ENCODE measurements at regions of chr19 and their contacts with region 1.

Region 1: DNA sequence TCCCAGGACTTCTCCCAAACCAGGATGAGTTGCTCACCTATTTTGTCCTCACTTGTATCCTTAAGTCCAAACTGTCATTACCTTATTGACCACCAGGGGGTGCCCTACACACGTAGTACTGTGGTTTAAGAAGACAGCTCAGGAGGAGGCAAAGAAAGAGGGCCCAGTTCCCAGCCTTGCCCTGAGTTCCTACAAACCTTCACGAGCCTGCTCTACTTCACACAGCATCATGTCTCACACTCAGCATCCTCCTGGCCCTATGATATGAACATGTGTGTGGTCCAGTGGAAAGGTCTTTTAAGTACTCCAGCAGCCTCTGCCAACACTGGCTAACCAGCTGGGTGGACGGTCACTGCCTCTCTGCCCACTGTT is 8.1 kb upstream of the ZNF784 start:
- DNase-seq: peak; percentile 80 to 99
- ATAC-seq: peak; percentile 70 to 81
- H3K4me3 ChIP-seq: no peak overlapping the region
- H3K27ac ChIP-seq: no peak overlapping the region
- H3K4me1 ChIP-seq: peaks cover 17% of the 10 kb centered on the region
- CTCF ChIP-seq: peak; percentile 91
- EP300 ChIP-seq: no peak
- POLR2A ChIP-seq: no peak
- RAD21 ChIP-seq: peak; percentile 62 to 82

Region 2: DNA sequence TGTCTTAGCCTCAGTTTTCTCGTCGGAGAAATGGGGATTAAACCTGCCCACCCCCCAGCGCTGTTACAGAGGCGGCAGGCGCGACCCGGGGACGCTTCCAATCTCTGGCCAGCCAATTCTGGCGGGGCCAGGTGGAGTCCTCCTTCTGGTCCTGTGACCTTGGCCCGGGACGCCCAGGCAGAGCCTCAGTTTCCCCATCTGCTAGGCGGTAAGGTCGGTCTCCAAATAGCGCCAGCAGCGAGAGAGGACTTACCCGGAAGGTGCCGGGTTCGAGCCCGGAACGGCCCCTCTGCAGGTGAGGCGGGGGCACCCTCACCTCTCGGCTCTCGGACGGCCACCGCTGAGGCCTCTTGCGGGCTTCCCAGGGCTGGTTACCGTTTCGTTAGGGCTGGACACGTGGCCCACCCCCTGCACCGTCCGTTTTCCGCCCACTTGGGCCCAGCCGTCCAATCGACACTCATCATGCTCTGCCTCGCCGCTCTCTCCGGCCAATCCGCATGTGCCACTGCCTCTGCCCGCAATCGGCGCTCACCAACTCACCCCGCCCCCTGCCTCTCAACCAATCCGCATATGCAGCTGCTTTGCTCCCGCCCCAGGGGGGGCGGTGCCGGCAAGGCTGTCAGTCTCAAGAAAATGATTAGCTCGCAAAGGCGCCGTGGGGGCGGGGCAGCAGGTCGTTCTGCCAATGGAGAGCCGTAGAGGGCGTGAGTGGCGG is 171.0 kb before region 1 on chr19 and contains the start of gene ISOC2:
- CTCF ChIA-PET with region 1: interaction called, 115 read pairs
- POLR2A ChIA-PET with region 1: no interaction called
- DNase-seq: peak; percentile 100
- ATAC-seq: peak; percentile 93 to 98
- H3K4me3 ChIP-seq: peak within 1 kb of the TSS; percentile 85
- H3K27ac ChIP-seq: peak within 1 kb of the TSS; percentile 83 to 90
- H3K4me1 ChIP-seq: peaks cover 14% of the 10 kb centered on the region; the same call in 2 of the 3 replicates
- CTCF ChIP-seq: no peak
- EP300 ChIP-seq: no peak
- POLR2A ChIP-seq: peak; percentile 77
- RAD21 ChIP-seq: no peak
- polyA plus RNA-seq, gene ISOC2: 45.3 and 51.5 TPM in 2 replicates

Region 3: DNA sequence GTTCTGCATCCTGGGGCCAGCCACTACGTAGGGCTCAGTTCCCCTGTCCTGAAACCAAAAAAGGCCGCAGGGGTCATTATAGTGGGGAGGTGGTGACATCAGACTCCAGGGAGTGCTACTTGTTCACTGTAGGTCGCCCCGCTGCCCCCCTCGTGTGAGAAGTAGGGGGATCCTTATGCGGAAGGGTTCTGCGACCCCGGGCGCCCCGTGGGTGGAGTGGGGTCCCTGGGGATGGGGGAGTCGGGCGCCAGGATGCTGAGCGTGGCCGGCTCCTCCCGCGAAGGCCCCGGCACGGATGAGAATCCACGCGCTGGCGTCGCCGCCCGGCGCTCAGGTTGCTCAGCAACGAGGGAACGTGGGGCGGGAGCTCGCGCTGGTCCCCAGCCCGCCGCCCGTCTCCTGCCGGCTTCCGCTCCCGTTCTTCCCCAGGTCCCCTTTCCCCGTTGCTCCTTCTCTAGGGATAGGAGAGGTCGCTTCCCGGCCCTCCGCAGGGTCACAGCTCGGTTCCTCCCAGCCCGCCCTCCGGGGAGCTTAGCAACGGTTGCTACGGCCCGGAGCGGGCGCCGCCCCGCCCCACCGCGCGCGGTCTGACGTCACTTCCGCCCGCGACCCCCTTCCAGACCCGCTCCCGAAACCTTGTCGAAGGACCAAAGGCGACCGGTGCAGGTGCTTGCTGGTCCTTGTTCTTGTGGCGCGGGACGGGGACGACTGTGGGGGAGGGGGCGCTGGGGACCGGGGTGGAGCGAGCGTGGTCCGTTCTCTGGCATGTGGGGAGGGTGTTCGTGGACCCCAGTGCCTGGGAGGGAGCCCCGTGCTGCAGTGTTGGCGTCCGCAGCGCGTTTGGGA is 147.6 kb before region 1 on chr19 and contains the start of gene NAT14:
- CTCF ChIA-PET with region 1: interaction called, 14 read pairs
- POLR2A ChIA-PET with region 1: no interaction called
- DNase-seq: peak; percentile 77 to 94
- ATAC-seq: peak; percentile 33 to 71
- H3K4me3 ChIP-seq: peak within 1 kb of the TSS; percentile 75
- H3K27ac ChIP-seq: peak within 1 kb of the TSS; percentile 89 to 93
- H3K4me1 ChIP-seq: peaks cover 50% of the 10 kb centered on the region
- CTCF ChIP-seq: no peak
- EP300 ChIP-seq: no peak
- POLR2A ChIP-seq: peak; percentile 22
- RAD21 ChIP-seq: no peak
- polyA plus RNA-seq, gene NAT14: 16.8 and 21.0 TPM in 2 replicates

Region 4: GRCh38 chr19:55586976-55587668 is 45.3 kb before region 1 on chr19:
- CTCF ChIA-PET with region 1: interaction called, 16 read pairs
- POLR2A ChIA-PET with region 1: no interaction called
- DNase-seq: peak; percentile 97 to 98
- ATAC-seq: peak; percentile 86 to 88
- H3K4me3 ChIP-seq: peak overlapping the region; percentile 43
- H3K27ac ChIP-seq: peak overlapping the region; percentile 53 to 79
- H3K4me1 ChIP-seq: peaks cover 22% of the 10 kb centered on the region
- CTCF ChIP-seq: no peak
- EP300 ChIP-seq: no peak
- POLR2A ChIP-seq: no peak
- RAD21 ChIP-seq: no peak; a peak in 1 of 5 replicates

Region 5: GRCh38 chr19:55611983-55612645 is 20.3 kb before region 1 on chr19:
- CTCF ChIA-PET with region 1: interaction called, 148 read pairs
- POLR2A ChIA-PET with region 1: no interaction called
- DNase-seq: no peak
- ATAC-seq: no peak
- H3K4me3 ChIP-seq: no peak overlapping the region
- H3K27ac ChIP-seq: no peak overlapping the region
- H3K4me1 ChIP-seq: peaks cover 2% of the 10 kb centered on the region; the same call in 1 of the 3 replicates
- CTCF ChIP-seq: no peak
- EP300 ChIP-seq: no peak
- POLR2A ChIP-seq: no peak
- RAD21 ChIP-seq: no peak

Region 6: GRCh38 chr19:55670280-55671053 is 38.0 kb after region 1 on chr19:
- CTCF ChIA-PET with region 1: interaction called, 11 read pairs
- POLR2A ChIA-PET with region 1: no interaction called
- DNase-seq: peak in 1 of 2 experiments; percentile 82
- ATAC-seq: peak; percentile 62 to 71
- H3K4me3 ChIP-seq: no peak overlapping the region
- H3K27ac ChIP-seq: peak overlapping the region in 1 of 2 experiments; percentile 42; a peak in 1 of 6 replicates
- H3K4me1 ChIP-seq: peaks cover 51% of the 10 kb centered on the region
- CTCF ChIP-seq: no peak
- EP300 ChIP-seq: no peak
- POLR2A ChIP-seq: no peak
- RAD21 ChIP-seq: no peak

Measured in A549 (cell line).